Endothelial cell of umbilical vein (primary cell): ENCODE measurements at regions of chr7 and their contacts with region 1.

Region 1: GRCh38 chr7:92447345-92448204 is at the start of gene GATAD1:
- DNase-seq: peak; percentile 89
- H3K4me3 ChIP-seq: peak within 1 kb of the TSS; percentile 92 to 98 (median 95)
- H3K27ac ChIP-seq: peak within 1 kb of the TSS; percentile 85
- H3K4me1 ChIP-seq: peaks cover 10% of the 10 kb centered on the region
- H3K27me3 ChIP-seq: no peaks in the 10 kb centered on the region
- CTCF ChIP-seq: peak in 1 of 2 donors; percentile 84
- POLR2A ChIP-seq: peak; percentile 89
- total RNA-seq, gene GATAD1: 26.2 and 28.9 TPM in 2 replicates

Region 2: GRCh38 chr7:91835846-91836368 is 611.7 kb before region 1 on chr7:
- CTCF ChIA-PET with region 1: interaction called, 91 read pairs
- POLR2A ChIA-PET with region 1: no interaction called
- dilution Hi-C with region 1: no loop called
- intact Hi-C with region 1: no loop called
- DNase-seq: peak; percentile 14
- H3K4me3 ChIP-seq: no peak overlapping the region
- H3K27ac ChIP-seq: no peak overlapping the region
- H3K4me1 ChIP-seq: no peaks in the 10 kb centered on the region
- H3K27me3 ChIP-seq: no peaks in the 10 kb centered on the region
- CTCF ChIP-seq: no peak
- POLR2A ChIP-seq: no peak

Region 3: DNA sequence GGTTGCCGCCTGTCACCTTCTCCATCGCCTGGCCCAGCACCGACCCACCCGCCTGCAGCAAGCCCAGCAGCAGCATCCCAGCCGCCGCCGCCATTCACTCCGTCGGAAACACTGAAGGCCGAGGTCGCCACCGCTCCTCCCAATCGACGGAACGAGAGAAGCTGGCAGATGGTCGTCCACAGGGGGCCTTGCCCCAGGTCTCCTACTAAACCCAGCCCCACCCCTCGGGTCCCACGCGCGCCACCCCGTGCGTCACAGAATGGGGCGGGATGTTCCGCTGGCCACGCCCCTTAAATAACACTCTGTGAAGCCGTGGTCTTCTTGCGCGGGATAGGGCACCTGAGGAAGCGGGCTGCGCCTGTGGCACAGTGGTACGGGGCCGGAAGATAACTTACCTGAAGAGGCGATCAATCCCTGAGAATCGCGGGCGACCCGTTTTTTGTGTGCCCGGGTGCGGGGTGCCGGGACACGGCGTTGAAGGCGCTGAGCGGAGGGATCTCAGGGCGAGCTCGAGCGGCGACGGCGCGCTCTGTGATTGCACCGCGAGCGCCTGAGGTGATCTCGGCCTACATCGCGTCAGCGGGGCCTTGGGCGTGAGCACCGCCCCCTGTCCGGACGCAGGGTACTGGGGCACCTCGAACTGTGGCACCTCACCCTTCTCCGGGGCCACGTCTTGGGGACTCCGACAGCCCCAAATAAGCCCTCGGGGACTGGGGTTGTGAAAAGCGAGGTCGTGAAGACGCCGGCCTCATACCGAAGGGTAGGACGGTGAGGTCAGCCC is 313.1 kb before region 1 on chr7 and contains the start of gene CYP51A1:
- CTCF ChIA-PET with region 1: interaction called, 9 read pairs
- POLR2A ChIA-PET with region 1: no interaction called
- dilution Hi-C with region 1: no loop called
- intact Hi-C with region 1: loop called (anchors 1 kb)
- DNase-seq: peak; percentile 94
- H3K4me3 ChIP-seq: peak within 1 kb of the TSS; percentile 77 to 84 (median 81)
- H3K27ac ChIP-seq: peak within 1 kb of the TSS; percentile 95
- H3K4me1 ChIP-seq: peaks cover 18% of the 10 kb centered on the region
- H3K27me3 ChIP-seq: no peaks in the 10 kb centered on the region
- CTCF ChIP-seq: peak in 1 of 2 donors; percentile 23
- POLR2A ChIP-seq: peak; percentile 52
- total RNA-seq, gene CYP51A1: 119 and 131 TPM in 2 replicates

Region 4: GRCh38 chr7:92192326-92192725 is 255.2 kb before region 1 on chr7:
- CTCF ChIA-PET with region 1: no interaction called
- POLR2A ChIA-PET with region 1: no interaction called
- dilution Hi-C with region 1: no loop called
- intact Hi-C with region 1: no loop called
- DNase-seq: no peak
- H3K4me3 ChIP-seq: no peak overlapping the region
- H3K27ac ChIP-seq: no peak overlapping the region
- H3K4me1 ChIP-seq: no peaks in the 10 kb centered on the region
- H3K27me3 ChIP-seq: no peaks in the 10 kb centered on the region
- CTCF ChIP-seq: no peak
- POLR2A ChIP-seq: no peak

Region 5: GRCh38 chr7:92415225-92415624 is 32.4 kb before region 1 on chr7:
- CTCF ChIA-PET with region 1: interaction called, 14 read pairs
- POLR2A ChIA-PET with region 1: no interaction called
- dilution Hi-C with region 1: no loop called
- intact Hi-C with region 1: no loop called
- DNase-seq: no peak
- H3K4me3 ChIP-seq: no peak overlapping the region
- H3K27ac ChIP-seq: no peak overlapping the region
- H3K4me1 ChIP-seq: no peaks in the 10 kb centered on the region
- H3K27me3 ChIP-seq: peaks cover 7 to 10% of the 10 kb centered on the region in 2 experiments
- CTCF ChIP-seq: no peak
- POLR2A ChIP-seq: no peak

Region 6: GRCh38 chr7:92461027-92462003 is 13.7 kb after region 1 on chr7:
- CTCF ChIA-PET with region 1: interaction called, 50 read pairs
- POLR2A ChIA-PET with region 1: no interaction called
- dilution Hi-C with region 1: no loop called
- intact Hi-C with region 1: loop called (anchors 1 kb)
- DNase-seq: peak; percentile 57
- H3K4me3 ChIP-seq: no peak overlapping the region
- H3K27ac ChIP-seq: no peak overlapping the region
- H3K4me1 ChIP-seq: peaks cover 5% of the 10 kb centered on the region
- H3K27me3 ChIP-seq: no peaks in the 10 kb centered on the region
- CTCF ChIP-seq: peak; percentile 74 to 76
- POLR2A ChIP-seq: no peak